Endothelial cell of umbilical vein (primary cell): ENCODE measurements at regions of chr15 and their contacts with region 1.

Region 1: GRCh38 chr15:73950831-73951561 is 24.7 kb downstream of the LOXL1 start:
- DNase-seq: peak; percentile 98
- H3K4me3 ChIP-seq: no peak overlapping the region
- H3K27ac ChIP-seq: peak overlapping the region; percentile 84
- H3K4me1 ChIP-seq: peaks cover 9% of the 10 kb centered on the region
- H3K27me3 ChIP-seq: no peaks in the 10 kb centered on the region
- CTCF ChIP-seq: peak; percentile 94 to 95
- POLR2A ChIP-seq: peak; percentile 32

Region 2: DNA sequence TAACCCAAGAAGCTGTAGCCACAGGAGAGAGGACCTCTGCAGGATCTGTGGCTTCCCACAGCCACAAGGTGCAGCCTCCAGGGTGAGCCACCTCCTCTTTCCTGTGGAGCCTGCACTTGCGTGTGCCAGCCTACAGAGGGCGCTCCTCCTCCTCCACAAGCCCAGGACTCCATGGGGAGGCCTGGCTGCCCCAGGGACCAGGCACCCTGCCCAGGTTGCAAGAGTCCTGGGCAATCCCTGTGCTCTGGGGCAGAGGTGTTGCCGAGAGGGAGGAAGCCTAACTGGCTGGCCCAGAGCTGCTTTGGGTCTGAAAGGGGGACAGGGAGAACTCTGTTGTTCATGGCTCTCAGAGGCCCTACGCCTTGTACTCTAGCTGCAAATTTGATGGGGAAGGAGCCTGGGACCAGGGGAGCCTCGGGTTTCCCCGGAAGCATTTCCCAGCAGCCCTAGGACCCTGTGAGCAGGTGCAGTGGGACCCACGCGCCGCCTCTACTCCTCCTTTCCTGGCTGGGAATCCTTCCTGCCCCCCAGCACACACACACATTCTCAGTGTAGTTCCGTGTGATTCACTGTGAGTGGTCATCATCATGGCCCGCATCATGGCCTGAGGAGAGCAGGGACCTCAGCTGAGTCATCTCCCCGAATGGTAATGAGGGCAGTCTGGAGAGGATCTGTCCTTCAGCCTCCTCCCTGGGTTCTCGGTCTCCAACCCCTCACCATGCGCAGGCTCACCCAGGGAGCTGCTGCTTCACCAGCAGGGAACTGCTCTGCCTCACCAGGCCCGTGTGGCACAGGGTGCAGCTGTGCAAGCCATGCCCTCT is 53.3 kb before region 1 on chr15:
- CTCF ChIA-PET with region 1: interaction called, 12 read pairs
- POLR2A ChIA-PET with region 1: no interaction called
- dilution Hi-C with region 1: no loop called
- intact Hi-C with region 1: no loop called
- DNase-seq: peak; percentile 65
- H3K4me3 ChIP-seq: no peak overlapping the region
- H3K27ac ChIP-seq: no peak overlapping the region
- H3K4me1 ChIP-seq: no peaks in the 10 kb centered on the region
- H3K27me3 ChIP-seq: peaks cover 0 to 1% of the 10 kb centered on the region in 2 experiments
- CTCF ChIP-seq: peak; percentile 90 to 96
- POLR2A ChIP-seq: no peak

Region 3: GRCh38 chr15:73964736-73965093 is 13.7 kb after region 1 on chr15:
- CTCF ChIA-PET with region 1: interaction called, 217 read pairs
- POLR2A ChIA-PET with region 1: no interaction called
- dilution Hi-C with region 1: no loop called
- intact Hi-C with region 1: loop called (anchors 1 kb)
- DNase-seq: peak; percentile 83
- H3K4me3 ChIP-seq: no peak overlapping the region
- H3K27ac ChIP-seq: no peak overlapping the region
- H3K4me1 ChIP-seq: peaks cover 20% of the 10 kb centered on the region
- H3K27me3 ChIP-seq: no peaks in the 10 kb centered on the region
- CTCF ChIP-seq: peak; percentile 95 to 98
- POLR2A ChIP-seq: no peak

Region 4: GRCh38 chr15:73991726-73992593 is 41.0 kb after region 1 on chr15 and contains the start of gene STOML1:
- CTCF ChIA-PET with region 1: interaction called, 7 read pairs
- POLR2A ChIA-PET with region 1: no interaction called
- dilution Hi-C with region 1: no loop called
- intact Hi-C with region 1: loop called (anchors 2 kb)
- DNase-seq: peak; percentile 90
- H3K4me3 ChIP-seq: peak within 1 kb of the TSS; percentile 51 to 67 (median 62)
- H3K27ac ChIP-seq: peak within 1 kb of the TSS; percentile 4
- H3K4me1 ChIP-seq: peaks cover 60% of the 10 kb centered on the region
- H3K27me3 ChIP-seq: no peaks in the 10 kb centered on the region
- CTCF ChIP-seq: peak; percentile 89 to 92
- POLR2A ChIP-seq: peak; percentile 67
- total RNA-seq, gene STOML1: 12.4 and 12.9 TPM in 2 replicates

Region 5: GRCh38 chr15:74134387-74135027 is 183.5 kb after region 1 on chr15:
- CTCF ChIA-PET with region 1: interaction called, 9 read pairs
- POLR2A ChIA-PET with region 1: no interaction called
- dilution Hi-C with region 1: no loop called
- intact Hi-C with region 1: loop called (anchors 5 kb)
- DNase-seq: peak; percentile 41
- H3K4me3 ChIP-seq: no peak overlapping the region
- H3K27ac ChIP-seq: no peak overlapping the region
- H3K4me1 ChIP-seq: peaks cover 12% of the 10 kb centered on the region
- H3K27me3 ChIP-seq: peaks cover 71 to 76% of the 10 kb centered on the region in 2 experiments
- CTCF ChIP-seq: peak; percentile 48 to 74
- POLR2A ChIP-seq: no peak